Uterus (tissue), 4 donors: ENCODE measurements at regions of chr3 and their contacts with region 1.

Region 1: DNA sequence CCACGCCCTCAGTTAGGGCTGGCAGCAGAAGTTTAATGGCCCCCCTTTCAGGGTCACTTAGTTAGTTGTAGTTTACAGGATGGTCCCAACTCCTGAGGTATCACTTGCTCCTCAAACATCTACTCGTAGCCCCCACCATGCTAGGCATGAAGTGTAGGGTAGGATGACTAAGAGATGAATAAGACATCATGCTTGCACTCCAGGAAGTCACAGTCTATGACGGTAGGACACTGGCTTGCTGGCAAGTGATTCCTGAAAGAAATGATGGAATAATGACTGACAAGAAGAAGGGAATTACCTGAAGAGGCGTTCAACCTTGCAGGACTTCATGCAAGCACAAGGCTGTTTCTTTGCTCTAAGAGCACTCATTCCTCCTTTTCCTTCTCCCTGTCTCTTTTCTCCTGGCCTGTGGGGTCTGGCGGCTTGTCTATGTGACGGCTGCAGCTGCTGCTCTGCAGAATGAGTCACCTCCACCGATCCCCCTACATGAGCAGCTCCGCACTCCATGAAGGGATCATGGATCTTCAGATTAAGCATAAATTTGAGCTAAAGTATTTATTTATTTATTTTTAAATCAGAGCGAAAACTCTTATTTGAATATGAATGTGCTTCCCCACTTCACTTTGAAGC is 82.9 kb upstream of the BOC start:
- DNase-seq: no peak
- H3K4me3 ChIP-seq: no peak overlapping the region
- H3K27ac ChIP-seq: no peak overlapping the region
- H3K4me1 ChIP-seq: no peaks in the 10 kb centered on the region
- H3K27me3 ChIP-seq: no peaks in the 10 kb centered on the region
- CTCF ChIP-seq: no peak
- POLR2A ChIP-seq: no peak

Region 2: GRCh38 chr3:112739252-112739965 is 389.1 kb before region 1 on chr3:
- intact Hi-C with region 1: no loop called
- DNase-seq: no peak
- H3K4me3 ChIP-seq: no peak overlapping the region
- H3K27ac ChIP-seq: peak overlapping the region in 1 of 2 donors; percentile 14
- H3K4me1 ChIP-seq: peaks cover 0 to 4% of the 10 kb centered on the region in 2 donors
- H3K27me3 ChIP-seq: no peaks in the 10 kb centered on the region
- CTCF ChIP-seq: no peak
- POLR2A ChIP-seq: no peak

Region 3: DNA sequence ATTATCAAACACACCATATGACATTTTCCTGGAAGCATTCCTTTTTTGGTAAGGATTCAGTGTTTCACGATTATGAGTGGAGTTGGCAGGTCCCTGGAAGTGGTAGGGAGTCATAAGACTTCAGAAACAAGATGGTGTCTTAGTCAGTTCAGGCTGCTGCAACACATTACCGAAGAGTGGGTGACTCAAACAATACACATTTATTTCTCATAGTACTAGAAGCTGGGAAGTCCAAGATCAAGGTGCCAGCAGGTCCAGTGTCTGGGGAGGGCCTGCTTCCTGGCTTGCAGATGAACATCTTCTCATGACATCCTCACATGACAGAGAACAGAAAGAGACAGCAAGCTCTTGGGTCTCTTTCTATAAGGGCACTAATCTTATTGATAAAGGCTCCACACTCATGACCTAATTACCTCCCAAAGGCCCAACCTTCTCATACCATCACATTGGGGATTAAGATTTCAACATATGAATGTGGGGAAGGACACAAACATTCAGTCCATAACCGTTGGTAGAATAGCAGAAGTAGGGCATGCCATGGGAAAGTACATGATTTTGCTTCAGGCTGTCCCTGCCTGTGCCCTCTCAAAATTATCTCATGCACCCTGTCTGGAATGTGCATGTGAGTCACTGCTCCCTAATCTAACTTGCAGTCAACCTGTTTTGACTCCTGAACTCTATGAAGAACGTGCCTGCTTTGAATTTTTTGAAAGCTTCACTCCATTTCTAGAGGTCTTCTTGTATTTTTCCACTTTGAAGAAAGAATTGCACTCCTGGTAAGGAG is 65.2 kb before region 1 on chr3:
- intact Hi-C with region 1: loop called (anchors 10 kb)
- DNase-seq: no peak
- H3K4me3 ChIP-seq: no peak overlapping the region
- H3K27ac ChIP-seq: no peak overlapping the region
- H3K4me1 ChIP-seq: no peaks in the 10 kb centered on the region
- H3K27me3 ChIP-seq: no peaks in the 10 kb centered on the region
- CTCF ChIP-seq: no peak
- POLR2A ChIP-seq: no peak

Region 4: GRCh38 chr3:113405180-113405579 is 276.7 kb after region 1 on chr3:
- intact Hi-C with region 1: no loop called
- DNase-seq: no peak
- H3K4me3 ChIP-seq: no peak overlapping the region
- H3K27ac ChIP-seq: no peak overlapping the region
- H3K4me1 ChIP-seq: no peaks in the 10 kb centered on the region
- H3K27me3 ChIP-seq: no peaks in the 10 kb centered on the region
- CTCF ChIP-seq: no peak
- POLR2A ChIP-seq: no peak